Mammary epithelial cell (primary cell): ENCODE measurements at regions of chr19 and their contacts with region 1.

Region 1: DNA sequence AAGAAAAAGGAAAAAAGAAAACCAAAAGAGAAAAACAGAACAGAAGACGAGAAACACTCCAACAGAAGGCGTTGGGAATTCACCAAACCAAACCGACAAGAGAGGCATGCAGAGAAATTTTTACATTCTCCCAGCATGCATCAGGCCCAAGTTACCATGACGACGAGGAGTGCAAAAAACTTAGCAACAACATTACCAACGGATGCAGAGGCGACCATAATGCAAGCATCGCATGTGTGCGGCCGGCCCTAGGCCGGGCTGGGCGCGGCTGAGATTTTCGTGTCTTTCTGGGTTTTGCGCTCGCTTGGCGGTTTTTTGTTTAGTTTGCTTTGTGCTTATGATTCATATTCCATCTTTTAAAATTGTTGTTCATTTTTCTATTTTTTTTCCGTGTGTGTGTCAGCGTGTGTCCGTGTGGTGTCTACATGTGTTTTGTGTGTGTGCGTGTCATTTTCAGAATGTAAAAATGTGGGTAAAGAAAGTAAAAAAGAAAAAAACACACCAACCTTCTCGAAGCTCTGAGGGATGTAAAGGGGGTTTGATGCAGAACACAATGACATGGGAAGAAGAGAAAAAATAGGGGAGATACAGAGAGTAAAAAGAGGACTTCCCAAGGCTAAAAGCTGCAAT is 84.9 kb downstream of the PTPRS start:
- DNase-seq: no peak
- H3K4me3 ChIP-seq: no peak overlapping the region
- H3K27ac ChIP-seq: no peak overlapping the region
- H3K4me1 ChIP-seq: peaks cover 5% of the 10 kb centered on the region
- H3K27me3 ChIP-seq: peaks cover 2% of the 10 kb centered on the region
- CTCF ChIP-seq: no peak

Region 2: DNA sequence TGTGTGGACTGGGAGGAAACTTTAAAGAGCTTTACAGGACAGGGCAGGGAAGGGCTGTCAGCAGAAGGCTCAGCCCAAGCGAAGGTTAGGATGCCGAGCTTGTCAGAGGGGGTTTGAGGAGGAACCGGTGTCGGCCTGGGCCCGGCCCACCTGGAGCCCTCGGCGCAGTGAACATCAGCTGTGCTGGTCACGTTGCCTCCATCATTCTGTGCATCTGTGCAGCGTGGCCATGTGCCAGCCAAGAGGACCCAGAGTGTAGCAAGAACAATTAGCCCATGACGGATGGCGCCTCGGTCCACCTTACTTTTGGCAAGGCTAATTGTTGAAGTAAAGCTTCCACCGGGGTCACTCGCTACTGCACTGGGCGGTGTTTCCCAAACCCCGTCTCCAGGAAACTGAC is 76.5 kb before region 1 on chr19:
- CTCF ChIA-PET with region 1: no interaction called
- dilution Hi-C with region 1: loop called (anchors 5 kb)
- in situ Hi-C with region 1: no loop called
- intact Hi-C with region 1: no loop called
- DNase-seq: no peak
- H3K4me3 ChIP-seq: no peak overlapping the region
- H3K27ac ChIP-seq: no peak overlapping the region
- H3K4me1 ChIP-seq: no peaks in the 10 kb centered on the region
- H3K27me3 ChIP-seq: no peaks in the 10 kb centered on the region
- CTCF ChIP-seq: no peak

Region 3: GRCh38 chr19:5425260-5425659 is 169.5 kb after region 1 on chr19:
- CTCF ChIA-PET with region 1: no interaction called
- dilution Hi-C with region 1: loop called (anchors 5 kb)
- in situ Hi-C with region 1: no loop called
- intact Hi-C with region 1: no loop called
- DNase-seq: no peak
- H3K4me3 ChIP-seq: no peak overlapping the region
- H3K27ac ChIP-seq: no peak overlapping the region
- H3K4me1 ChIP-seq: no peaks in the 10 kb centered on the region
- H3K27me3 ChIP-seq: peaks cover 5% of the 10 kb centered on the region
- CTCF ChIP-seq: no peak

Region 4: DNA sequence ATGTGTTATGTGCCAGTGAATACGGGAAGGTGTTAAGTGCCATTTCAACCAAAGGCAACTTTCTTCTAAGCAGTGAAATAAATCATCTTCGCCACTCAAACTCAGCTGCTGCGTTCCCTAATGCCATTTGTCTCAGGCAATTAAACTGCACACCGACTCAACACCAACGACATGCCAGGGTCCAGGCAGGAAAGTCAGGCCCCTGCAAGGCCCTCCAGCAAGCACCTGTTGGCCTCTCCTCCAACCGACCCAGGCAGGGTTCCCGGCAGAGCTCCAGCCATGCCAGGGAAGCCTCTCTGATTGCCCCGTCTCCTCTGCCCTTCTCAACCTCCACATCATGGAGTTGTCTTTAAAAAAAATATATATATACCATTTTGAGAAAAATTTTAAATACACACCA is 345.1 kb after region 1 on chr19:
- CTCF ChIA-PET with region 1: no interaction called
- dilution Hi-C with region 1: loop called (anchors 5 kb)
- in situ Hi-C with region 1: no loop called
- intact Hi-C with region 1: no loop called
- DNase-seq: no peak
- H3K4me3 ChIP-seq: no peak overlapping the region
- H3K27ac ChIP-seq: no peak overlapping the region
- H3K4me1 ChIP-seq: no peaks in the 10 kb centered on the region
- H3K27me3 ChIP-seq: no peaks in the 10 kb centered on the region
- CTCF ChIP-seq: no peak